ENCODE measurements at regions of chr3 and their contacts with region 1.

Region 1: DNA sequence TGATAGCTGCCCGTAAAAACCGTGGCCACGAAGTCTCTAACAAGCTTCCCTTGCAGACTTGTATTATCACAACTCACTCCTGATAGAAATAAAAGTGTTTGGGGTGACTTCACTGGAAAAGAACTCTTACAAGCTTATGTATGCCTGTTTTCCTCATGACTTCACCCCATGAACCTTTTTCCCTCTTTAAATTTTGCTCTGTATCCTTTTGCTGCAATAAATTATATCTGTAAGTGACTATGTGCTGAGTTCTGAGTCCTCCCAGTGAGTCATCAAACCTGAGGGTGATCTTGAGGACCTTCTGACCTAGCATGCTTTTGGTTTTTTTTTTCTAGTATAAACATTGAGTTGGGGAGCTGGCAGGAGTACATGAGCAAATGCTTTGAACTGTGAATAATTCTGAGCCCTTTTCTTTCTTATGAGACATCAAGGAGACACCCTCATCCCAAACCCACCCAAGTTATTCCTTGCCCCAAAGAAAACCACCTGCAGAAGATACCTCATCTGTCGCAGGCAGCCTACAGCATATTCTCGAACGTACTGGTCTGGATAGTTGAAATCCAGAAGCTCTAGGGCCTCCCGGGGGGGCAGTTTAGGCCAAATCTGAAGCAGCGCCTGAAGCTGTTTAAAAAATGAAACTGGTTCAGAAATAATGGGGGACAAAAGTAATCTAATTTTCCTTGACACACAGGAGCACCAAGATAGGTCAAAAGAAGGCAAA is 85.9 kb downstream of the FAIM start:
- DNase-seq: no peak
- H3K4me3 Mint-ChIP-seq: no peak overlapping the region
- H3K27ac Mint-ChIP-seq: no peak overlapping the region
- H3K4me1 Mint-ChIP-seq: no peaks in the 10 kb centered on the region
- H3K27me3 Mint-ChIP-seq: no peaks in the 10 kb centered on the region

Region 2: DNA sequence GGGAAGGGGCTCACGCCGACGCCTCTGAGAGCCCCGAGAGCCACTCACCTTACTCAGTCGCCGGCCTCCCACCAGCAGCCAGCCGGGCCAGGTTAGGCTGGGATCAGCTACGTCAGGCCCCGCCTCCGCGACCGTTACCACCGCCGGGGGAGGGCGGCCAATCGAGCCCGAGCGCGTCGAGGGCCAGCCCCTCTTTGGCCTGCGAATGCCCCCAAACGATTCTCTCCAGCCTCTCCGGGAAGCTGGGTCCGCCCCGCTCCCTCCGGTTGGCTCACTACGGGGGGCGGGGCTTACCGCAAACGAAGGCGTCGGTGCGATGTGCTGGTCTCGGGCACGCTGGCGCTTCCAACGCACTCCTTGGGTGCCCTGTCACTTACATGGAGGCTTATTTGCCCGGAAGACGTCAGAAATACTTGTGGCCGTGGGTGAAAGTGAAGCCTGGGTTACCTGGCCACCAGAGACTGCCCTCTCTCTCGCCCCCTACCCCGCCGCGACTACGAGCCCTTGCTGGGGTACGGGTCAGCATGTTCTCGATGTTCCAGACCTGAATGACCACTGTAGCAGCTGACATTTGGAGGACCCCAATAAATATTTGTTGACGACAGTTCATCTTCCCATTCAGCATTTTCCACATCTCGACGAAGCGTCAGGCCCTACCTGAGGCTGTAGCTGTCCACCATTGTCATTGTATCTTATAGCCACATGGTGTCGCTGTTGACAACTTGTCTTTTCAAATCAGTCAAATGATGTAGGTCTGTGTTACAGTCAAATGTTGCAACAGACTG is 100.1 kb before region 1 on chr3 and contains the start of gene CEP70:
- CTCF ChIA-PET with region 1: interaction called, 10 read pairs
- DNase-seq: peak; percentile 94
- H3K4me3 Mint-ChIP-seq: peak within 1 kb of the TSS; percentile 73
- H3K27ac Mint-ChIP-seq: peak within 1 kb of the TSS; percentile 93
- H3K4me1 Mint-ChIP-seq: peaks cover 13% of the 10 kb centered on the region
- H3K27me3 Mint-ChIP-seq: no peaks in the 10 kb centered on the region

Measured in activated naive CD4-positive, alpha-beta T cell treated with anti-CD3 and anti-CD28 coated beads, Interleukin-2, amount 10 ng/mL, durations not matched to agents 7 days and 5 days (primary cell).